K562 (cell line): ENCODE measurements at regions of chr7 and their contacts with region 1.

Region 1: DNA sequence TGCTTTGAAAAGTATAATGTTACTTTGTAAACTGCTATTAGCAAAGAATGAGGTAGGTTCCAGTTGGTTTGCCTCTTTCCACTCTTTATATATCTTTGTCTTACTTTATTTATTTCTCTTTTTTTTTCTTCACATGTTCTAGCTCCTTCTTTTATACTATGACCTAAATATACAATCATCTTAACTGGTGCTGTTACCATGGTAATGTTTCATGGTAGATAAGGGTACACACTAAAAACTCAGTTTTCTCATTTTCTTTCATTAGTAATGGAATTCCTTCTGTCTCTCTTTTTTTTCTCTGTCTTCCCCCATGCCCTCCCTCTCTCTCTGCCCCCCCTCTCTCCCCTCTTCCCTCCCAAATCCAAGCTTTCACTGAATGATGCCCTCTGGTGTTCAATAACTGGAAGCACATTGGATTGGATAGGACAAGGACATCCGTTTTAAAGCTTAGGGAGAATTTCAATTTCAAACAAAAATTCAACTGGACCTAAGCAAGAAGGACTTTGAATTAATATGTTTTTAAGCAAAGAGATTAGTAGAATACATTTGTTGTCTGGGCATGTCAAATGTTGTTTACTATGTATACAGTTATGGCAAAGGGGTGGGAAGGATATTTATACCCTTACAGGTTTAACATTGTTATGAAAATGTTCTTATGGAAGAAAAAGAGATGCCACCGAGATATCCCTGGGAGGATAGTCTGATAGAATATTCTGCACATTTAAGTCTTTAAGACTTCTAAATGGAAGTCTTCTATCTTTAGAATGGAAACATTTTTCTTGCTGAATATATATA is 6.0 kb downstream of the CHRM2 start:
- DNase-seq: peak; percentile 57 to 71 (median 63)
- ATAC-seq: peak; percentile 88
- H3K4me3 ChIP-seq: no peak overlapping the region
- H3K27ac ChIP-seq: no peak overlapping the region
- H3K4me1 ChIP-seq: peaks cover 0 to 9% of the 10 kb centered on the region in 2 experiments; a peak in 1 of 5 replicates
- H3K27me3 ChIP-seq: peaks cover 10 to 20% of the 10 kb centered on the region in 2 experiments; a peak in 3 of 5 replicates
- CTCF ChIP-seq: peak; percentile 36 to 60 (median 53); a peak in 4 of 6 replicates
- EP300 ChIP-seq: no peak
- POLR2A ChIP-seq: no peak
- RAD21 ChIP-seq: peak in 1 of 2 experiments; percentile 44; a peak in 2 of 4 replicates

Region 2: GRCh38 chr7:135274495-135275268 is 1599.8 kb before region 1 on chr7:
- CTCF ChIA-PET with region 1: no interaction called
- POLR2A ChIA-PET with region 1: no interaction called
- in situ Hi-C with region 1: no loop called
- intact Hi-C with region 1: loop called (anchors 10 kb)
- DNase-seq: peak; percentile 77 to 88 (median 83)
- ATAC-seq: peak; percentile 95
- H3K4me3 ChIP-seq: no peak overlapping the region
- H3K27ac ChIP-seq: no peak overlapping the region
- H3K4me1 ChIP-seq: peaks cover 0 to 4% of the 10 kb centered on the region in 2 experiments; a peak in 1 of 5 replicates
- H3K27me3 ChIP-seq: peaks cover 22 to 40% of the 10 kb centered on the region in 2 experiments
- CTCF ChIP-seq: peak; percentile 80 to 96 (median 94)
- EP300 ChIP-seq: no peak
- POLR2A ChIP-seq: no peak
- RAD21 ChIP-seq: peak; percentile 81 to 92

Region 3: GRCh38 chr7:136857573-136857972 is 16.9 kb before region 1 on chr7:
- CTCF ChIA-PET with region 1: no interaction called
- POLR2A ChIA-PET with region 1: no interaction called
- in situ Hi-C with region 1: no loop called
- intact Hi-C with region 1: no loop called
- DNase-seq: no peak
- ATAC-seq: no peak
- H3K4me3 ChIP-seq: no peak overlapping the region
- H3K27ac ChIP-seq: no peak overlapping the region
- H3K4me1 ChIP-seq: no peaks in the 10 kb centered on the region
- H3K27me3 ChIP-seq: no peaks in the 10 kb centered on the region
- CTCF ChIP-seq: no peak
- EP300 ChIP-seq: no peak
- POLR2A ChIP-seq: no peak
- RAD21 ChIP-seq: no peak